T-cell (primary cell): ENCODE measurements at regions of chr2 and their contacts with region 1.

Region 1: DNA sequence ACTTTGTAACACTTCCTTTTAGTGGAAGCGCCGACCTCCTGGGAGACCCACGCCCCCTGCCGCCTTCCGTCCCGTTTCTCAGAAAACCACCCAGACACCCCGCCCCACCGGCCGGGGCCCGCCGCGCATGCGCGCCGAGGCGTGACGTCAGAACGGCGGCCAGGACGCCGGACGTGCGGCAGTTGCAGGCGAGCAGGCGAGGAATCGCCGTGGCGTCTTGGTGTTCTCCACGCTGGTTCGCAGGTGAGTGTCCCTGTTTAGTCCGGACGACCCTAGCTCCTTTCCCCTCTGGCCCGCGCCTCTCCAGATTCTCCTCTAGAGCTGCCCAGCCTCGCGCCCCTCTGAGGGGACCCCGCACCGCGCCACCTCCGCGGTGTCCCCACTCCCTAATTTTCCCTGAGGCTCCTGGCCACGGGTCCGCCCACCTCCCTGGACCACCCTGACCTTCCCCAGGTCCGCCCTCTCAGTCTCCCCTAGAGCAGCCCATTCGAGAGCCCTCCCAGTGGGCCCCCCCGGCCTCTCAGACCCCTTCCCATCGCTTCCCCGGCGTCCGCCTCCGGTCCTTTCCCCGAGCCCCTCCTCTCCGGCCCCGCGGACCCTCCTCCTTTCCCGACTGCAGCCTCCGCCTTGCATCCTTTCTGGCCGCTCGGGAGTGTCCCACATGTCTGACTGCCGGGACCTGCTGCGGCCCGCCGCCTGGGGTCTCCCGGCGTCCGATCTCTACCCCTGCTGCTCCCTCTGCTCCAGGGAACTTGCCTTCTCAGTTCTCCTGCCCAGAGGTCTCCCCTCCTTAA is at the start of gene PLEKHB2:
- DNase-seq: peak; percentile 78 to 96 (median 90)
- ATAC-seq: peak; percentile 74 to 82 (median 78)
- H3K4me3 ChIP-seq: peak within 1 kb of the TSS; percentile 88 to 99
- H3K4me3 Mint-ChIP-seq: peak within 1 kb of the TSS; percentile 88 to 99 (median 96)
- H3K27ac ChIP-seq: peak within 1 kb of the TSS; percentile 92
- H3K27ac Mint-ChIP-seq: peak within 1 kb of the TSS; percentile 94 to 96
- H3K4me1 ChIP-seq: peaks cover 18 to 30% of the 10 kb centered on the region in 2 experiments
- H3K4me1 Mint-ChIP-seq: peaks cover 53 to 57% (median 55%) of the 10 kb centered on the region in 3 donors
- H3K27me3 ChIP-seq: no peaks in the 10 kb centered on the region
- H3K27me3 Mint-ChIP-seq: no peaks in the 10 kb centered on the region
- total RNA-seq, gene PLEKHB2: 52.5 to 61.7 (median 53.2) TPM

Region 2: GRCh38 chr2:131093006-131093695 is 12.2 kb before region 1 on chr2 and contains the start of gene FAM168B:
- CTCF ChIA-PET with region 1: interaction called in 1 of 2 experiments, 16 read pairs
- POLR2A ChIA-PET with region 1: interaction called, 4 to 14 read pairs
- DNase-seq: peak; percentile 76 to 96 (median 86)
- ATAC-seq: peak; percentile 88 to 91 (median 90)
- H3K4me3 ChIP-seq: peak within 1 kb of the TSS; percentile 85 to 96
- H3K4me3 Mint-ChIP-seq: peak within 1 kb of the TSS; percentile 88 to 94 (median 92)
- H3K27ac ChIP-seq: peak within 1 kb of the TSS; percentile 79
- H3K27ac Mint-ChIP-seq: peak within 1 kb of the TSS; percentile 94 to 97
- H3K4me1 ChIP-seq: peaks cover 3 to 30% of the 10 kb centered on the region in 2 experiments
- H3K4me1 Mint-ChIP-seq: peaks cover 21 to 41% (median 24%) of the 10 kb centered on the region in 3 donors
- H3K27me3 ChIP-seq: no peaks in the 10 kb centered on the region
- H3K27me3 Mint-ChIP-seq: no peaks in the 10 kb centered on the region
- total RNA-seq, gene FAM168B: 61.7 to 84.0 (median 73.3) TPM

Region 3: DNA sequence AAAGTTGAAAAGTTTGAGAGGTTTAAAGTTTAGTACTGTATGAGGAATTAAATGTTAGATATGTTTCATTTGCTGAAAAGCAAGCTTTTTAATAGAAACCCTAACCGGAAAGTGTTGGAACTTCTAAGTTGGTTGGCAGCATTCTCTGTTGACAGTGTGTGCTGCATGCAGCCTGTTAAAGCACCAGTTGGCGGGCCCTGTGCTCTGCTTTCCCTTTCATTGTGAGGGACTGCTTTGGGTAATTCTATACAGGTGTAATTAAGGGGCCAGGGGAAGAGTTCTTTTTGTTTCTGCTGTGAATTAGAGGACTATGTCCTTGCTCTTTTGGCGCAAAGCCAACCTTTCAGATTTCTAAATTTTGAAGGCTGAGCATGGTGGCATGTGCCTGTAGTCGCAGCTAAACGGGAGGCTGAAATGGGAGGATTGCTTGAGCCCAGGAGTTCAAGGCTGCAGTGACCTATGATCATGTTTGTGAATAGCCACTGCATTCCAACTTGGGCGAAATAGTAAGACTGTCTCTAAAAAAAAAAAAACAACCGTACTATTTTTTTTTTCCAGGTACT is 19.9 kb after region 1 on chr2:
- CTCF ChIA-PET with region 1: no interaction called
- POLR2A ChIA-PET with region 1: no interaction called
- DNase-seq: no peak
- ATAC-seq: no peak
- H3K4me3 ChIP-seq: no peak overlapping the region
- H3K4me3 Mint-ChIP-seq: no peak overlapping the region
- H3K27ac ChIP-seq: no peak overlapping the region
- H3K27ac Mint-ChIP-seq: no peak overlapping the region
- H3K4me1 ChIP-seq: peaks cover 0 to 4% of the 10 kb centered on the region in 2 experiments
- H3K4me1 Mint-ChIP-seq: peaks cover 9 to 12% (median 10%) of the 10 kb centered on the region in 3 donors
- H3K27me3 ChIP-seq: no peaks in the 10 kb centered on the region
- H3K27me3 Mint-ChIP-seq: no peaks in the 10 kb centered on the region

Region 4: DNA sequence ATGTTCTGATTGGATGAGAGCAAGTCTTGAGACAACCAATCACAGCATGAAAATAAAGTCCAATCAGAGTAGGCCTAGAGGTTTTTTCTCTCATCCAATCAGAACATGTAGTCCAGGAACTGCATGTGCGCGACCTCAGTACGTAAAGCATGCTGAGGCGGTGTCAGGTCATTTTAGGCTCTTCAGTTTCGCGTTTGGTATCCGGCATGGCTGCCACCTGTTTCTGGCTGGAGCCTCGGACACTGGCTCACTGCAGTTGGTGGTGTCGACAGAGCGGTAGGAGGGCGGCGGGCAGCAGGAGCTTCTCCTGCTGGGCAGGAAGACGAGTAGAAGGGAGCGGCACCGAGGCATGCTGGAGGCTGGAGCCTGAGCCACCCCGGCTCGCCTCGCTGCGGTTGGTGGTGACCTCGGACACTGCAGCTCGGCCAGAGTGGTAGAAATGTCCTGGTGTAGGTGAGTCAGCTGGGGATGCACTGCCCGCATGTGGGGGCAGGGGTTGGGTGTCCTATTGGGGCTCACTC is 438.1 kb after region 1 on chr2:
- CTCF ChIA-PET with region 1: no interaction called
- POLR2A ChIA-PET with region 1: no interaction called
- DNase-seq: no peak
- ATAC-seq: no peak
- H3K4me3 ChIP-seq: no peak overlapping the region
- H3K4me3 Mint-ChIP-seq: no peak overlapping the region
- H3K27ac ChIP-seq: no peak overlapping the region
- H3K27ac Mint-ChIP-seq: no peak overlapping the region
- H3K4me1 ChIP-seq: no peaks in the 10 kb centered on the region
- H3K4me1 Mint-ChIP-seq: no peaks in the 10 kb centered on the region
- H3K27me3 ChIP-seq: peaks cover 0 to 3% of the 10 kb centered on the region in 2 experiments
- H3K27me3 Mint-ChIP-seq: peaks cover 0 to 12% of the 10 kb centered on the region in 2 donors